B cell (primary cell): ENCODE measurements at regions of chr7 and their contacts with region 1.

Region 1: DNA sequence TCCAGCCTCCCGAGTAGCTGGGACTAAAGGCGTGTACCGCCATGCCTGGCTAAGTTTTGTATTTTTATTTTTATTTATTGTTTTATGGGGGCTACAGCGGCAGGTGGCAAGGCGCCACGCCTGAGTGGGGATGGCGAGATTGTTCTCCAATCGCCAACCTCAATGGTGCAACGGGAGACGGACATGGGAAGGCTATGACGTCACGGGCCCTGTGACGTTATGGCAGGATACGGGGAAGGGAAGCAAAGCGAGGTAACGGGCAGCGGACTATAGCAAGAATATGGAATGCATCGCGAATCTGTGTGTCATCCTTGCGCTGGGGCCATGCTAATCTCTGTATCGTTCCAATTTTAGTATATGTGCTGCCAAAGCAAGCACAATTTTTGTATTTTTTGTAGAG is 24.8 kb upstream of the FIS1 start:
- DNase-seq: no peak
- ATAC-seq: no peak
- H3K4me3 ChIP-seq: no peak overlapping the region
- H3K4me3 Mint-ChIP-seq: no peak overlapping the region
- H3K27ac ChIP-seq: no peak overlapping the region
- H3K27ac Mint-ChIP-seq: no peak overlapping the region
- H3K4me1 ChIP-seq: no peaks in the 10 kb centered on the region
- H3K4me1 Mint-ChIP-seq: no peaks in the 10 kb centered on the region
- H3K27me3 ChIP-seq: peaks cover 0 to 3% (median 0%) of the 10 kb centered on the region in 4 experiments
- H3K27me3 Mint-ChIP-seq: peaks cover 21% of the 10 kb centered on the region
- CTCF ChIP-seq: no peak

Region 2: DNA sequence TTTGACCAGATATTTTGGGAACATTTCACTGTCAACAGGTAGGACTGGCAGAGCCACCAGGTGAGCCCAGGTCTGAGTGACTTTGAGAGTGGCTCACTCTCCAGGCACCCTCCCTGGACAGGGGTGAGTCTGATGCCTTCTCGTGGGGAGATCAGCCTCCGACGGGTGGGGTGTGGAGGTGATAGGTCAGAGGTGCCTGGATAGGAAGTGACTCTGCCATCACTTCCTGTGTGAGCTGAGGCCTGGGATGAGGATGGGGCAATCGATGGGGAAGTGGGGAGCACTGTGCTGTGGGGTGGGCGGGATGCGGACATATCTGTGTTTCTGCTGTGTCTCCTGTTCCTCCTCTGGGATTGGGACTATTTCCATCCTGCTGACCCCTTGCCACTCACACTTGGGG is 17.4 kb after region 1 on chr7:
- CTCF ChIA-PET with region 1: interaction called, 10 read pairs
- POLR2A ChIA-PET with region 1: interaction called, 5 read pairs
- intact Hi-C with region 1: no loop called
- DNase-seq: no peak
- ATAC-seq: no peak
- H3K4me3 ChIP-seq: no peak overlapping the region
- H3K4me3 Mint-ChIP-seq: no peak overlapping the region
- H3K27ac ChIP-seq: no peak overlapping the region
- H3K27ac Mint-ChIP-seq: no peak overlapping the region
- H3K4me1 ChIP-seq: peaks cover 0 to 13% of the 10 kb centered on the region in 2 donors
- H3K4me1 Mint-ChIP-seq: peaks cover 19% of the 10 kb centered on the region
- H3K27me3 ChIP-seq: peaks cover 0 to 6% (median 2%) of the 10 kb centered on the region in 4 experiments
- H3K27me3 Mint-ChIP-seq: peaks cover 10% of the 10 kb centered on the region
- CTCF ChIP-seq: no peak